ENCODE measurements at regions of chr5 and their contacts with region 1.

Region 1: GRCh38 chr5:107869438-107870115 is 198.8 kb upstream of the EFNA5 start:
- DNase-seq: no peak

Region 2: DNA sequence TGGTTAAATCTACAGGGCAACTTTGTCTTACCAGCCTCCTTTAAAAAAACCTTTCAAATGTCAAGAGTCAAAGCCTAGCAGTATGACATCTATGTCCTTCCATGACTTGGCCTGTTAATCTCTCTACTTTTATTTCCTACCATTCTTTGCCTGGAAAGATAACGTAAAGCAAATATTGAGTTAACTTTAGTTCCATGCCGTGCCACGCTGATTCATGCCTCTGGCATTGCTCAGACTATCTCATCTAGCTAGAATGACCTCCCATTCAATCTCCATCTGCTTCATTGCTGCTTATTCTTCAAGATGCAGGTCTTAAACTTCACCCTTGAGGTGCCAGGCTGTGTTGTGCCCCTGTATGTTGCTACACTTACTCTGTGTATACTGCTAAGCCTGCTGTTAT is 928.6 kb before region 1 on chr5:
- intact Hi-C with region 1: loop called in 1 of 2 experiments (anchors 5 kb)
- DNase-seq: no peak

Region 3: DNA sequence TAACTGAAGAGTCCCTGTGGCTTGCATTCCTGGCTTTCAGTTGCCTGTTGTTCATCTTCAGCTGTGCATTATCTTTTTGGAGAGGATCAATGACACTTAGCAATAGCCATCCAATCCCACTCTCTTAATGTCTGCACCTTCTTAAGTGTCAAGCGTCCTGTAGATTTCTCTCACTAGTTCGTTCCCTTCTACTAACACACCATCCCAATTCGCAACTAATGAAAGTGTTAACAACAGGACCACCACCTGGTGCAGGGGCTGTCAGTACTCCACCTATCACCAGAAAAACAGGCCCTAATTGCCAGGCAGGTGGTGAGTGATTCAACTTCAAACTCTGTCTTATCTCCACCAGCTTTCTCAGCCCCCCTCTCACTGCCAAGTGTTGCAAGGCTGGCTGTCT is 29.4 kb before region 1 on chr5:
- intact Hi-C with region 1: loop called in 1 of 2 experiments (anchors 1 kb)
- DNase-seq: no peak

Region 4: GRCh38 chr5:108715408-108715807 is 845.8 kb after region 1 on chr5:
- intact Hi-C with region 1: no loop called
- DNase-seq: no peak